Tibial artery (tissue), 4 donors: ENCODE measurements at regions of chr2 and their contacts with region 1.

Region 1: GRCh38 chr2:187499941-187500532 is 52.0 kb upstream of the CALCRL start:
- DNase-seq: peak in 1 of 2 donors; percentile 58
- H3K4me3 ChIP-seq: no peak overlapping the region
- H3K27ac ChIP-seq: peak overlapping the region in 1 of 2 donors; percentile 18
- H3K4me1 ChIP-seq: peaks cover 0 to 35% (median 0%) of the 10 kb centered on the region in 4 donors
- H3K27me3 ChIP-seq: no peaks in the 10 kb centered on the region
- CTCF ChIP-seq: peak; percentile 85 to 94

Region 2: GRCh38 chr2:187519419-187520120 is 19.5 kb after region 1 on chr2:
- intact Hi-C with region 1: no loop called
- DNase-seq: no peak
- H3K4me3 ChIP-seq: no peak overlapping the region
- H3K27ac ChIP-seq: no peak overlapping the region
- H3K4me1 ChIP-seq: peaks cover 0 to 9% (median 0%) of the 10 kb centered on the region in 4 donors
- H3K27me3 ChIP-seq: no peaks in the 10 kb centered on the region
- CTCF ChIP-seq: no peak

Region 3: DNA sequence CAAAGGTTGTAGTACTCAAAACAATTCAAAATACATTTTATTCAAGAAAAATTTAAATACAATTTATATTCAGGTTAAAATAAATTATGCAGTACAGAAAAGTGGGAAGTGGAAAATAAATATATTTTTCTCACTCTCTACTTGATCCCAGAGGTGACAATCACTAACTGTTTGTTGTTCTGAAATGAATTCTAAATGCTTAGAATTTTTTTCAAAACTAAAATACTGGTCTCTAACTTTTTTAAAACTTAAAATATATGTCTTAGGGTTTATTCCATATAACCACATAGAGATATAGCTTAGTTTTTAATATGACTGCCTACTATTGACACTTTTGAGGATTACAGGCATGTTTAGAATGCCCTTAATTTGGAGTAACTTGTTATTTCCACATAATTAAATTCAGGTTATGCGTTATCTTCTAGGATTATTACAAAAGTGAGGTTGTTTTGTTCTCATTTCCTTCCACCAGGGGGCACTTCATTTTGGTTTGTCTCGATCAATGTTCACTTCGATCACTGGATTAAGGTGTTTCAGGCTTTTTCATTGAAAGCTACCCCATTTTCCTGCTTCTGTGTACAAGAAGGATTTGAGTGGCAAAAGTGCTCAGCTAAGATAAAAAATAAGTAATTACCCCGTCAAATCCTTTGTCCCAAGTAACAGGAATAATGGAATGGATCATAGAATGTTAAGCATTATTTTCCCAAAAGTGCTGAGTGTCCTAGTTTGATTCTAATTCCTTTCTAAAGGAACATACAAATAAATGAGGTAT is 81.3 kb after region 1 on chr2:
- intact Hi-C with region 1: loop called (anchors 2 kb)
- DNase-seq: no peak
- H3K4me3 ChIP-seq: peak overlapping the region; percentile 32 to 33
- H3K27ac ChIP-seq: peak overlapping the region in 1 of 2 donors; percentile 11
- H3K4me1 ChIP-seq: peaks cover 0 to 4% (median 0%) of the 10 kb centered on the region in 4 donors
- H3K27me3 ChIP-seq: no peaks in the 10 kb centered on the region
- CTCF ChIP-seq: peak; percentile 63 to 80

Region 4: GRCh38 chr2:187842978-187843847 is 343.2 kb after region 1 on chr2:
- intact Hi-C with region 1: loop called (anchors 5 kb)
- DNase-seq: no peak
- H3K4me3 ChIP-seq: no peak overlapping the region
- H3K27ac ChIP-seq: no peak overlapping the region
- H3K4me1 ChIP-seq: peaks cover 0 to 12% (median 0%) of the 10 kb centered on the region in 4 donors
- H3K27me3 ChIP-seq: no peaks in the 10 kb centered on the region
- CTCF ChIP-seq: peak; percentile 66 to 70

Region 5: GRCh38 chr2:188158337-188159100 is 658.5 kb after region 1 on chr2:
- intact Hi-C with region 1: loop called (anchors 10 kb)
- DNase-seq: no peak
- H3K4me3 ChIP-seq: no peak overlapping the region
- H3K27ac ChIP-seq: no peak overlapping the region
- H3K4me1 ChIP-seq: no peaks in the 10 kb centered on the region
- H3K27me3 ChIP-seq: no peaks in the 10 kb centered on the region
- CTCF ChIP-seq: no peak